Psoas muscle (tissue), 8 donors: ENCODE measurements at regions of chr4 and their contacts with region 1.

Region 1: GRCh38 chr4:5979976-5980375 is 38.3 kb downstream of the C4orf50 start:
- DNase-seq: no peak
- ATAC-seq: no peak
- H3K4me3 ChIP-seq: no peak overlapping the region
- H3K27ac ChIP-seq: no peak overlapping the region
- H3K4me1 ChIP-seq: no peaks in the 10 kb centered on the region
- H3K27me3 ChIP-seq: peaks cover 0 to 35% (median 0%) of the 10 kb centered on the region in 3 donors
- CTCF ChIP-seq: no peak

Region 2: GRCh38 chr4:5824635-5825034 is 155.3 kb before region 1 on chr4:
- intact Hi-C with region 1: loop called in 1 of 2 experiments (anchors 10 kb)
- DNase-seq: no peak
- ATAC-seq: no peak
- H3K4me3 ChIP-seq: no peak overlapping the region
- H3K27ac ChIP-seq: no peak overlapping the region
- H3K4me1 ChIP-seq: no peaks in the 10 kb centered on the region
- H3K27me3 ChIP-seq: no peaks in the 10 kb centered on the region
- CTCF ChIP-seq: peak; percentile 8

Region 3: DNA sequence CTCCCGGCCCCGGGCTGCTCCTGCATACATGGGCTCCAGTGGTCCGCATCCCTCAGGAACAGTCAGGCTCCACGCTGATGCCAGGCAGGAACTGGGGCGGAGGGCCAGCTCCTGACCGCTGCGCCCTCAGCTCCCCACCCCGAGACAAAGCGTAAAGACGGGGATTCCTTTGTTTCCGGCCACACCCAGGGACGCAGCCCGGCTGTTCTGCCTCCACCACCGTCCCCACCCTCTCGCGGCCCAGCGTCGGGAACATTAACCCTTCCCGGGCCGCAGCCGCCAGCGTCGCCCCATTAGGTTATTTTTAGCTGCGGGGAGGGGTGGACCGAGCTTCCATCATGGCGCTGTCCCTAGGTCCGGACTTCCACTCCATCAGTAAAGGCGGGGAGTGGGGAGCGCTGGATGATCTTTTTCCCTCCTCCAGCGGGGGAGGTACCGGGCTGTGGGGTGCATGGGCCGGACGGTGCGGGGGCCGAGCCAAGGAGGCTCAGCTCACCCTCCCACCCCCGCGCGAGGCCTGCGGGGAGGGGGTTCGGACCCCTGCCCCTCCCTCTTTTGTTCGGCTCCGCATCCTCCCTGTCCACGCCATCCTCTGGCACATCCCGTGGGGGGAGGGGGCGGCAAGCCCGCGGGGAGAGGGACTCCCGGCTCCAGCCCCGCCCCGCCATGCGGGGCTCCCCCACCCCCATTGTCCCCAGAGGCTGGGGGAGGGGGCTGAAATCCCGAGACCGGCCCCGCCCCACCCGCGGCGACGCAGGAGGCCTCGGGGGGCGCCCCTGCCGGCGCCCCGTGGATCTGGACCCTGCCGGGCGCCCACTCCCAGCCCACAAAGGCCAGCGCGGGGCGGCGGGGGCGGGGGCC is 92.4 kb before region 1 on chr4:
- intact Hi-C with region 1: no loop called
- DNase-seq: no peak
- ATAC-seq: no peak
- H3K4me3 ChIP-seq: peak overlapping the region; percentile 37
- H3K27ac ChIP-seq: no peak overlapping the region
- H3K4me1 ChIP-seq: peaks cover 3% of the 10 kb centered on the region
- H3K27me3 ChIP-seq: peaks cover 0 to 64% (median 37%) of the 10 kb centered on the region in 3 donors
- CTCF ChIP-seq: no peak

Region 4: DNA sequence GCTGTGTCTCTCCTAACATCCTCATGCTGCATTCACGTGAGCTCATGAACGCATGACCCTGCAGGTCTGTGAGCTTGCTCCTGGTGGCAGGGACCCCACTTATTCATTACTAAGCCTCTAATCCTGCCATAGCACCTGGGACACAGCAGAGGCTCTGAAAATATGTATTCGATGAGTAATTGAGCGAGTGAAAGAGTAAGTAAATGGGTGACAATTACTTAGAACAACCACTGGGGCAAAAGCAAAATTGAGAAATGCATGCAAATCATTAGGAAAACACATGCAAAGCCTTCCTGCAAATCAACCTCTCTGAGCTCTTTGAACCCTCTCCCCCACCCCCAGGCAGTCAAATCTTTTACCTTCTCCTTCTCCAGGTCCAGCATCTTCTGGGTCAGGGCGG is 61.8 kb after region 1 on chr4:
- intact Hi-C with region 1: no loop called
- DNase-seq: no peak
- ATAC-seq: no peak
- H3K4me3 ChIP-seq: no peak overlapping the region
- H3K27ac ChIP-seq: no peak overlapping the region
- H3K4me1 ChIP-seq: no peaks in the 10 kb centered on the region
- H3K27me3 ChIP-seq: peaks cover 0 to 3% (median 3%) of the 10 kb centered on the region in 3 donors
- CTCF ChIP-seq: no peak

Region 5: GRCh38 chr4:6087673-6088341 is 107.8 kb after region 1 on chr4:
- intact Hi-C with region 1: no loop called
- DNase-seq: no peak
- ATAC-seq: no peak
- H3K4me3 ChIP-seq: no peak overlapping the region
- H3K27ac ChIP-seq: no peak overlapping the region
- H3K4me1 ChIP-seq: no peaks in the 10 kb centered on the region
- H3K27me3 ChIP-seq: peaks cover 0 to 3% (median 0%) of the 10 kb centered on the region in 3 donors
- CTCF ChIP-seq: peak; percentile 17

Region 6: DNA sequence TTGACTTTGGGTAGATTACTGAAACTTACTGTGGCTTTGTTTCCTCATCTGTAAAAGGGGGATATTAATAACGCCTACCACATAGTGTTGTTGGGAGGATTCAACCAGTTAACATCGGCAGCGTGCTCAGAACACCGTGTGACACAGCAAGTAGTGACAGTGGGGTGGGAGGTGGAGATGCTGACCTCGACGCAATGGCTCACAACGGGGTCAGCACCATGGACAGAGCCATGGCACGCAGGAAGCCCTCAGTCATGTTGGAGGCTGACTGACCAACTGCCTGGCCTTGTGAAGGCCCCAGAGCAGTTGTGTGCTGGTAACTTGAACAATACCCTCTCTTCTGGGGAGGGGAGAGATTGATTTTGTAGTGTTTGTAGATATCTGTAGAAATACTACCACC is 382.9 kb after region 1 on chr4:
- intact Hi-C with region 1: no loop called
- DNase-seq: peak in 1 of 2 donors; percentile 32
- ATAC-seq: no peak
- H3K4me3 ChIP-seq: no peak overlapping the region
- H3K27ac ChIP-seq: no peak overlapping the region
- H3K4me1 ChIP-seq: no peaks in the 10 kb centered on the region
- H3K27me3 ChIP-seq: peaks cover 0 to 27% (median 7%) of the 10 kb centered on the region in 3 donors
- CTCF ChIP-seq: no peak